ENCODE measurements at regions of chr15 and their contacts with region 1.

Region 1: DNA sequence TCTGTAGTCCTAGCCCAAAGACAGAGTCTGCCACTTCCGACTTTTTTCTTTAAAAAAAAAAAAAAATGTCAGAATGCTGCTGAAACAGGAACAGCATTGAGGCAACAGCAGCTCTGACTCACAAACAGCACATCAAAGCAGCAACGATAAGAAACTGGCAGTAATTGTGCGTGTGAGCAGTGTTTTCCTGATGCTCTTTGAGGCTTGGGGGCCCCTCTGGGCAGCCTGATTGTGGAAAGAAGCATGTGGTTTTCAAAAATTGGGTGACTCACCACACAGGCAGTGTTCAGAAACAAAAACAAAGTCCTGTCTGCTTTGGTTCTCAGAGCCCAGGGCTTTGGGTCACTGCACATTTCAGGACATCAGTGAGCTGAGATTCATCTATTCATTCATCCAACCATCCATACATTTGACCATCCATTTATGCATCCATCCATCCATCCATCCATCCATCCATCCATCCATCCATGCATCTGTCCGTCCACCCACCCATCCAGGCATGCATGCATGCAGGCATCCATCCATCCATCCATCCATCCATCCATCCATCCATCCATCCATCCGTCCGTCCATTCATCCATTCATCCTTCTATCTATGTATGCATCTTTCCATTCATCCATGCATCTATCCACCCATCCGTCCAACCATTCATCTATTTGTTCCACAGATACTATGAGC is 308.4 kb downstream of the RPLP1 start:
- DNase-seq: peak; percentile 97
- H3K4me3 ChIP-seq: no peak overlapping the region
- H3K27ac ChIP-seq: peak overlapping the region; percentile 67
- H3K4me1 ChIP-seq: peaks cover 36% of the 10 kb centered on the region
- H3K27me3 ChIP-seq: no peaks in the 10 kb centered on the region
- CTCF ChIP-seq: no peak
- POLR2A ChIP-seq: peak; percentile 39

Region 2: DNA sequence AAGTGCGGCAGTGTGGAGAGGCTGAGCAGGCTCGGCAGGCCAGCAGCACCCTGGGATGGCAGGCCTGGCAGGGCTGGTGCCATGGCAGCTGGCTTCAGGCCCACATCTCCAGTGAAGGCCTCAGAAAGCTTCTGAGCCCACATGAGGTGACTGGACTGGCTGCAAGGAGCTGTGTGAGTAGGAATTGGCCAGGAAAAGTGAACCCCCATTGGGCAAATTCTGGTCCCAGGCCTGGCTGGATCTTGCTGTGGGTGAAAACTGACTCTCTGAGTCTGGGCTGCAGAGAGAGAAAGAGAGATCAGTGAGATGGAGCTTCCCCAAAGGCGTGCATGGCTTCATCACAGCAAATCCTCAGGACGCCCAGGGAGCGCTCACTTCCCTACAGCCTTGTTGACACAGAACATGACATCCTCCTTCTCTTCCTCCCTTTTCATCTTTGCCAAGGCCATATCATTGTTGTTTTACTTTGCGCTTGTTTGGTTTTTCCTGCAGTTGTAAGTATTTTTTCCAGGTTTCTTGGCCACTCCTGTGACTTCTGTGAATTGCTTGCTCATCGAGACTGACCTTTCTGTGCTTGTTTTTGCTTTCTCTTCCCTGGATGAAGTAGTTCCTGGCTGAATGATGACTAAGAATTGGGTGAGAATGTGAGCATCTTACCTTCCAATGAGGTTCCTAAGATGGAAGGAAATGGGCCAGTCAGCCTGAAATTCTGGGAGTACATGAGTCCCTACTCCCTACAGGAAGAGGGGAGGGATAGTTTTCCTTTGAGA is 37.6 kb after region 1 on chr15:
- CTCF ChIA-PET with region 1: interaction called, 3 read pairs
- POLR2A ChIA-PET with region 1: no interaction called
- dilution Hi-C with region 1: no loop called
- intact Hi-C with region 1: loop called (anchors 2 kb)
- DNase-seq: peak; percentile 77
- H3K4me3 ChIP-seq: no peak overlapping the region
- H3K27ac ChIP-seq: peak overlapping the region; percentile 24
- H3K4me1 ChIP-seq: peaks cover 11% of the 10 kb centered on the region
- H3K27me3 ChIP-seq: no peaks in the 10 kb centered on the region
- CTCF ChIP-seq: no peak
- POLR2A ChIP-seq: no peak

Region 3: DNA sequence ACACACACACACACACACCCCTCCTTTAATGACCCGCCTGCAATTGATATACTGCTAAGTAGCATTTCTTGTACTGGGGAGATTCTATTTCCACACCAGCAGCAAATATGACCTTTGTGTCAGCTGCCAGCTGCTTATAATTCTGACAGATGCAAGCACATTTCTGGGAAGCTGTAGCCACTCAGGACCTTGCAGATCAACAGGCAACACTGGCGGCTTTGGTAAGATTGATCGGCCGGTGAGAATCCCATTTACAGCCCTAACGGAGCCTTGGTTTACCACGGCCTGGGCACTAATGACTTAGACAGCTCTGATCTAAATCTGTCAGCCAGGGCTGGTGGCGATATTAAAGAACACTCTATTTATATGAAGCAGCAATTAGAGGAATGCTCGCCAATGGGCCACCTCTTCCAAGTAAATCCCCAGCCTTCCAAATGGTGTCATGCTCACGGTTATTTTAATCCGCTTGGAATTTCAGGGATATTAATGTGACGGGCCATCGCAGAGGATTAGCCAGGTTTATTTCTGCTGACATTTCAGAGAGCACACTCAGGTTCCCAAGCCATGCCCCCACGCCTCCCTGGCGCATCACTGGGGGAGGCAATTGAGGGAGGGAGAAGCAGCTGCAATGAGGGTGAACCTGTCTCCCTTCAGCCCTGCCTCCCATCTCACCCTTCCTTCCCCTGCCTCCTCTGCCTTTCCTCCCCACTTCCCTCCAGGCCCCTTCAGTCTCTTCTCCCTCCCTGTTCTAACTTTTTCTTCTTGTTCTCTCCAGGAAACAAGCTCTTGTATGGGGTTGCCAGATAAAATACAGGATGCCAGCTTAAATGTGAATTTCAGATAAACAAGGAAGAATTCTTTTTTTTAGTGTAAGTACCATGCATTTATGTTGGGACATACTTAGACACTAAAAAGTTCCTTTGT is 49.7 kb after region 1 on chr15:
- CTCF ChIA-PET with region 1: no interaction called
- POLR2A ChIA-PET with region 1: no interaction called
- dilution Hi-C with region 1: no loop called
- intact Hi-C with region 1: loop called (anchors 5 kb)
- DNase-seq: peak; percentile 53
- H3K4me3 ChIP-seq: no peak overlapping the region
- H3K27ac ChIP-seq: no peak overlapping the region
- H3K4me1 ChIP-seq: no peaks in the 10 kb centered on the region
- H3K27me3 ChIP-seq: peaks cover 5 to 6% of the 10 kb centered on the region in 2 experiments
- CTCF ChIP-seq: no peak
- POLR2A ChIP-seq: no peak

Measured in endothelial cell of umbilical vein (primary cell).